PC-9 (cell line): ENCODE measurements at regions of chr5 and their contacts with region 1.

Region 1: DNA sequence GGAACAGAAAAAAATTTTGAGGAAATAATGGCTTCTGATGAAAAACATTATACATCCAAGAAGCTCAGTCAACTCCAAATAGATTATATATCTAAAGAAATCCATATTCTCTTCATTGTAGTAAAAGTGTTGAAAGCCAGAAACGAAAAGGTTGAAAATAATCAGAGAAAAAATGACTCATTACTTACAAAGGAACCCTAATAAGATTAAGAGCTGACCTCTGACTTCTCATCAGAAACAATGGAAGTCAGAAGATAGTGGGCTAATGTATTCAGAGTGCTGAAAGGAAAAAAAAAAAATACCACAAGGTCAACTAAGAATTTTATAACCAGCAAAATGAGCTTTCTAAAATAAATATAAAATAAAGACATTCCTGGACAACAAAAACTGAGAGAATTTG is 60.0 kb downstream of the HSD17B4 start:
- DNase-seq: no peak
- H3K4me3 ChIP-seq: no peak overlapping the region
- H3K27ac ChIP-seq: no peak overlapping the region
- H3K4me1 ChIP-seq: peaks cover 10% of the 10 kb centered on the region; the same call in 1 of the 2 replicates
- H3K27me3 ChIP-seq: no peaks in the 10 kb centered on the region
- CTCF ChIP-seq: no peak

Region 2: GRCh38 chr5:119532637-119533036 is 20.4 kb after region 1 on chr5:
- CTCF ChIA-PET with region 1: no interaction called
- POLR2A ChIA-PET with region 1: no interaction called
- intact Hi-C with region 1: loop called (anchors 1 kb)
- DNase-seq: no peak
- H3K4me3 ChIP-seq: no peak overlapping the region
- H3K27ac ChIP-seq: no peak overlapping the region
- H3K4me1 ChIP-seq: no peaks in the 10 kb centered on the region
- H3K27me3 ChIP-seq: no peaks in the 10 kb centered on the region
- CTCF ChIP-seq: no peak

Region 3: DNA sequence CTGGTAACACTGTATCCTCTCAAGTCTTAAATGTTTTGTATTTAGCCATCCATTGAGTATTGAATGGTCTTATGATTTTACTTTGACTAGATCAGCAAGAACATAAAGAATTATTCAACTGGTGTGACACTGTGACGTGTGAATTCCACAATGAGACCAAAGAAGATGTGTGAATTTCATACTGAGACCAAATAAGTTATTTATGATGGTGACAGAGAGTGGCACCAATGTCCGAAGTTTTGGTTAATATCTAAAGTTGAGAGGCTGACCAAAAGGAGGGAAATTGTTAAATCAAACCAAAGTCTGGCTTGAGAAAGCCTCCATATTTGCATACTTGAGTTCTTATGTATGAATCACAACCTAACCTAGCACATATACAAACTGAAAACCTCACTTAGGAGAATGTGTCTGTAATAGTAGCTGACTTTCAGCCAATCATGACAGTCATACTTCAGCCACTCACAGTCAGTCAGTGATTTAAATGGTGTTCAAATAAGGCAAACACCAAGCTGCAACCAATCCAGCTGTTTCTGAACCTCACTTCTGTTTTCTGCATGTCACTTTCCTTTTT is 85.5 kb after region 1 on chr5:
- CTCF ChIA-PET with region 1: no interaction called
- POLR2A ChIA-PET with region 1: no interaction called
- intact Hi-C with region 1: no loop called
- DNase-seq: no peak
- H3K4me3 ChIP-seq: no peak overlapping the region
- H3K27ac ChIP-seq: no peak overlapping the region
- H3K4me1 ChIP-seq: no peaks in the 10 kb centered on the region
- H3K27me3 ChIP-seq: no peaks in the 10 kb centered on the region
- CTCF ChIP-seq: no peak

Region 4: DNA sequence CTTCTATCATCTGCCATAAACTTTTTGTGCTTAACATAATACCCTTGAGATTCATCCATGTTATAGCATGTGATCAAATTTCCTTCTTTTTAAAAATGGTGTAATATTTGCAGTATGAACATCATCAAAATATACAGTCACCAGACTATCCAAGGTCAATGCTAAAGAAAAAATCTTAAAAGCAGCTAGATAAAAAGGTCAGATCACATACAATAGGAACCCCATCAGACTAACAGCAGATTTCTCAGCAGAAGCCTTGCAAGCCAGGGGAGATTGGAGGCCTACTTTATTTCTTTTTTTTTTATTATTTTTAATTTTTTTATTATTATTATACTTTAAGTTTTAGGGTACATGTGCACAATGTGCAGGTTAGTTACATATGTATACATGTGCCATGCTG is 154.3 kb after region 1 on chr5:
- CTCF ChIA-PET with region 1: no interaction called
- POLR2A ChIA-PET with region 1: no interaction called
- intact Hi-C with region 1: no loop called
- DNase-seq: no peak
- H3K4me3 ChIP-seq: no peak overlapping the region
- H3K27ac ChIP-seq: no peak overlapping the region
- H3K4me1 ChIP-seq: no peaks in the 10 kb centered on the region
- H3K27me3 ChIP-seq: no peaks in the 10 kb centered on the region
- CTCF ChIP-seq: no peak